Activated CD4-positive, alpha-beta T cell treated with anti-CD3 and anti-CD28 coated beads, Interleukin-2, amount 10 ng/mL, durations not matched to agents 7 days and 5 days (primary cell): ENCODE measurements at regions of chrX and their contacts with region 1.

Region 1: DNA sequence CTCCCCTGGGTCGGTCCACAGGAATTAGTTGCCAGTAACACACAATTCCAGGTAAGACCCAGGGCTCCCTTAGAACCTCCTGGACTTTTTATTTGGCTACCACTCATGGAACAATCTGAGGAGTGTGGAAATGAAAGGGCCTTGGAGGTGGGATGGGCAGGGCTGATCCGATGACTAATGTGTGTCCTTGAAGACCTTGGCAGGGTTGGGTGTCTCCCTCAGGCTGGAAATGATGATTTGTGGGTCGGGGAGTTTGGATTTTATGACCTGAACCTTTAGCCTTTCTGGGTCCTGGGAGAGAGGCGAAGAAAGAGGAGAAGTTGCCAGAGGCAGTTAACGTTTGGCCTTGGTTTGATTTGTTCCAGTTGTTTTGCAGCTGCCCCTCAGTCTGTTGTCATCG is 425.0 kb downstream of the MID1IP1 start:
- DNase-seq: no peak
- H3K4me3 Mint-ChIP-seq: no peak overlapping the region
- H3K27ac Mint-ChIP-seq: no peak overlapping the region
- H3K4me1 Mint-ChIP-seq: no peaks in the 10 kb centered on the region
- H3K27me3 Mint-ChIP-seq: no peaks in the 10 kb centered on the region

Region 2: GRCh38 chrX:39242187-39242586 is 15.9 kb after region 1 on chrX:
- CTCF ChIA-PET with region 1: interaction called, 11 read pairs
- POLR2A ChIA-PET with region 1: no interaction called
- DNase-seq: peak; percentile 19
- H3K4me3 Mint-ChIP-seq: no peak overlapping the region
- H3K27ac Mint-ChIP-seq: no peak overlapping the region
- H3K4me1 Mint-ChIP-seq: peaks cover 6% of the 10 kb centered on the region
- H3K27me3 Mint-ChIP-seq: no peaks in the 10 kb centered on the region